Activated T-helper 1 cell treated with anti-CD3 and anti-CD28 coated beads, Interleukin-12 subunit alpha, Interleukin-12 subunit beta, Interleukin-2, Interleukin-4 antibody, amounts not matched to agents 30 ng/mL and 10 ng/mL and 1 ng/mL, durations not matched to agents 14 hours and 24 hours and 36 hours (primary cell): ENCODE measurements at regions of chrX and their contacts with region 1.

Region 1: DNA sequence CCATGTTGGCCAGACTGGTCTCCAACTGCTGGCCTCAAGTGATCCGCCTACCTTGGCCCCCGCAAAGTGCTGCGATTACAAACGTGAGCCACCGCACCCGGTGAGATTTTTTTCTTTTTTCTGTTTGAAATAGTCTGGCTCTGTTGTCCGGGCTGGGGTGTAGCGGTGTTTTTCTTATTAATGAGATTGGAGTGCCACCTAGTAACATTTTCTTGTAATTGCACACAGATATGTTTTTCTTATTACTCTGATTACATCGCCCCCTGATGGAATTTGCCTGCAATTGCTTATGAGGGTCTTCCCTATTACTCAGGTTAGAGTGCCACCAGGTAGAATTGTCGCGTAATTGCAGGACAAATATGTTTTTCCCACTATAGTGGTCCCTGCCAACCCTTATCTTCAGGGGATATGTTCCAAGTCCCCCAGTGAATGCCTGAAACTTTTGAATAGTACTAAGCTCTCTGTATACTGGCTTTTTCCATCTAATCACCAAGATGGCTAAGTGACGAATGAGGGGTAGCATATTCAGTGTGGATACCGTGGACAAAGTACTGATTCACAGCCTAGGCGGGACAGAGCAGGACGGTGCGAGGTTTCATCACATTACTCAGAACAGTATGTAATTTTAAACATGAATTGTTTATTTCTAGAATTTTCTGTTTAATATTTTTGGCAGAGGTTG is 8.6 kb upstream of the PDHA1 start:
- DNase-seq: peak; percentile 0
- H3K4me3 Mint-ChIP-seq: no peak overlapping the region
- H3K27ac Mint-ChIP-seq: no peak overlapping the region
- H3K4me1 Mint-ChIP-seq: no peaks in the 10 kb centered on the region
- H3K27me3 Mint-ChIP-seq: peaks cover 2% of the 10 kb centered on the region

Region 2: GRCh38 chrX:18390941-18391538 is 944.0 kb before region 1 on chrX:
- intact Hi-C with region 1: loop called (anchors 1 kb)
- DNase-seq: peak; percentile 14
- H3K4me3 Mint-ChIP-seq: no peak overlapping the region
- H3K27ac Mint-ChIP-seq: no peak overlapping the region
- H3K4me1 Mint-ChIP-seq: peaks cover 6% of the 10 kb centered on the region
- H3K27me3 Mint-ChIP-seq: no peaks in the 10 kb centered on the region

Region 3: DNA sequence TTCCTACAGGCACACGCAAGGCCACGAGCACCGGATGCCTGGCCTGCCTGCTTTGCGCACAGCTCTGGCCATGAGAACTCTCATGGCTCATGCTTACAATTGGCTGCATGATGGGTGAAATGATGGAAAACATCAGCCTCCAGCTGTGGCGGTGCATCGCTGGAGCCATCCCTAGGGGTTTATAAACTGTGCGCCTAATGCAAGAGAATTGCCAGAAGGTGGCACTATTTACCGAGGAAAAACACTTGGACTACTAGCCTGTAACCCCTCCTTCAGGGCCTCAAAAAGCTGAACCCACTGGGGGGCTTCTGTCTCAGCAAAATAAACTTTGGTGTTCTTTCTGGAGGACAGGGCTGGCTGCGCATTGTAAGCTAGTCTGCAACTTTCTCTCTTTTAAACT is 403.1 kb before region 1 on chrX:
- intact Hi-C with region 1: loop called (anchors 1 kb)
- DNase-seq: no peak
- H3K4me3 Mint-ChIP-seq: no peak overlapping the region
- H3K27ac Mint-ChIP-seq: no peak overlapping the region
- H3K4me1 Mint-ChIP-seq: no peaks in the 10 kb centered on the region
- H3K27me3 Mint-ChIP-seq: no peaks in the 10 kb centered on the region

Region 4: DNA sequence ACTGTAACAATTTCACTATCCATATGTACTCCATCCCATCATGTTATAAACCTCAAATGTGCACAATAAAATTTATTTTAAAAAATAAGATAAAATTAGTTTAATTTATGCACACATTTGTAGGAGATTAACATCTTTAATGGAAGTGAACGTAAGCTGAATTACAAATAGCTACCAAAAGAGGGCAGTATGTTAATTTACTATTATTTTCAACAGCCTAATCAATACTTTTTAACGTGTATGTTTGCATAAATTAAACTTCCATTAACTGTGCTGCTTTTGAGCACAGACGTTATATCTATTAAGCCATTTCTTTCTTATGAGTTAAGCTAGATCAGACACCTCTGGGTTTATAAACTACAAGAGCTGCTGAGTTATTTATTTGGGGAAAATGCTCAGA is 294.7 kb before region 1 on chrX:
- intact Hi-C with region 1: loop called (anchors 1 kb)
- DNase-seq: no peak
- H3K4me3 Mint-ChIP-seq: no peak overlapping the region
- H3K27ac Mint-ChIP-seq: no peak overlapping the region
- H3K4me1 Mint-ChIP-seq: no peaks in the 10 kb centered on the region
- H3K27me3 Mint-ChIP-seq: no peaks in the 10 kb centered on the region